ENCODE measurements at regions of chr2 and their contacts with region 1.

Region 1: DNA sequence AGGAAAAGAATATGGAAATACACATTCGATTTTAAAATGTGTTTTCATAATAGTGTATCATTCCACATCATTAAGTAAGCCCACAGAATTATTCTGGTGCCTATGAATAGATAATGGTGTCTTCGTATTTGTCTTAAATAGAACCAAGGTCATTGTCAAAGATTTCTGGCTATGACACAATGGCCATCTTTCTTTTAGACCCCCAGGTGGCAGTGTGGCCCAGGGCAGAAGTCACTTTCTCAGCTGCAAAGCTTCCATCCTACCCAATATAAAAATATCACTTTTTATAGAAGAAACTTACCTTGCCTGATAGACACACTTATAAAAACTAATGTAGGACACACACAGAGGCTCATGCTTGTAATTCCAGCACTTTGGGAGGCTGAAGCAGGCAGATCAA is 57.5 kb downstream of the ZRANB3 start:
- DNase-seq: peak in 1 of 2 experiments; percentile 30
- H3K4me3 ChIP-seq: no peak overlapping the region
- H3K4me3 Mint-ChIP-seq: no peak overlapping the region
- H3K27ac Mint-ChIP-seq: no peak overlapping the region
- H3K4me1 ChIP-seq: no peaks in the 10 kb centered on the region
- H3K4me1 Mint-ChIP-seq: no peaks in the 10 kb centered on the region
- H3K27me3 ChIP-seq: no peaks in the 10 kb centered on the region
- H3K27me3 Mint-ChIP-seq: no peaks in the 10 kb centered on the region
- CTCF ChIP-seq: peak; percentile 50 to 73

Region 2: GRCh38 chr2:135531231-135532228 is 58.0 kb after region 1 on chr2 and contains the start of gene R3HDM1:
- CTCF ChIA-PET with region 1: no interaction called
- POLR2A ChIA-PET with region 1: no interaction called
- intact Hi-C with region 1: loop called (anchors 1 kb)
- DNase-seq: peak; percentile 98 to 99
- H3K4me3 ChIP-seq: peak within 1 kb of the TSS; percentile 86
- H3K4me3 Mint-ChIP-seq: no peak within 1 kb of the TSS
- H3K27ac Mint-ChIP-seq: peak within 1 kb of the TSS; percentile 45
- H3K4me1 ChIP-seq: peaks cover 7% of the 10 kb centered on the region; the same call in 1 of the 2 replicates
- H3K4me1 Mint-ChIP-seq: peaks cover 6% of the 10 kb centered on the region
- H3K27me3 ChIP-seq: no peaks in the 10 kb centered on the region
- H3K27me3 Mint-ChIP-seq: no peaks in the 10 kb centered on the region
- CTCF ChIP-seq: peak; percentile 23 to 39
- total RNA-seq, gene R3HDM1: 44.4 and 45.3 TPM in 2 replicates

Region 3: DNA sequence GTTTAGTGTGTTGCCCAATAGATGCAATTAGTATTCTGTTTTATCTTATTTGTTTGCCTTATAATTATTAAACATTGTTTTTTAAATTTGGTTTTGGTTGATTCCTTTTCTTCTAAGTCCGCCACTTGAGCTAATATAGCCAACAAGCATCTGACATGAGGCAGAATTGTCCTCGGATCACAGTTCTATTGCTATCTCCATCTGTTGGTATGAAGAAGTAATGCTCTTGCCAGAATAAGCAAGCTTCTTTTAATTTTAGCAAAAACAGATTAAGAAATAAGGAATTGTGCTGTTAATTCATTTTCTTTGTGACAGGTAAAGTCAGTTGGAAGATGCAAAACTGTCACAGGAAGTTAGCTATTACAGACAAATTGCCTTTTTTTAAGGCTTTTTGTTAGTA is 112.0 kb after region 1 on chr2:
- CTCF ChIA-PET with region 1: interaction called, 4 read pairs
- POLR2A ChIA-PET with region 1: no interaction called
- intact Hi-C with region 1: loop called (anchors 5 kb)
- DNase-seq: no peak
- H3K4me3 ChIP-seq: no peak overlapping the region
- H3K4me3 Mint-ChIP-seq: no peak overlapping the region
- H3K27ac Mint-ChIP-seq: no peak overlapping the region
- H3K4me1 ChIP-seq: no peaks in the 10 kb centered on the region
- H3K4me1 Mint-ChIP-seq: peaks cover 6% of the 10 kb centered on the region
- H3K27me3 ChIP-seq: no peaks in the 10 kb centered on the region
- H3K27me3 Mint-ChIP-seq: no peaks in the 10 kb centered on the region
- CTCF ChIP-seq: peak in 1 of 2 experiments; percentile 8

Region 4: GRCh38 chr2:135600915-135601314 is 127.3 kb after region 1 on chr2:
- CTCF ChIA-PET with region 1: interaction called, 5 read pairs
- POLR2A ChIA-PET with region 1: no interaction called
- intact Hi-C with region 1: loop called (anchors 1 kb)
- DNase-seq: no peak
- H3K4me3 ChIP-seq: no peak overlapping the region
- H3K4me3 Mint-ChIP-seq: no peak overlapping the region
- H3K27ac Mint-ChIP-seq: no peak overlapping the region
- H3K4me1 ChIP-seq: no peaks in the 10 kb centered on the region
- H3K4me1 Mint-ChIP-seq: no peaks in the 10 kb centered on the region
- H3K27me3 ChIP-seq: no peaks in the 10 kb centered on the region
- H3K27me3 Mint-ChIP-seq: no peaks in the 10 kb centered on the region
- CTCF ChIP-seq: no peak

Region 5: GRCh38 chr2:135709992-135710391 is 236.4 kb after region 1 on chr2:
- CTCF ChIA-PET with region 1: interaction called, 14 read pairs
- POLR2A ChIA-PET with region 1: no interaction called
- intact Hi-C with region 1: no loop called
- DNase-seq: peak; percentile 54 to 75
- H3K4me3 ChIP-seq: no peak overlapping the region
- H3K4me3 Mint-ChIP-seq: no peak overlapping the region
- H3K27ac Mint-ChIP-seq: no peak overlapping the region
- H3K4me1 ChIP-seq: no peaks in the 10 kb centered on the region
- H3K4me1 Mint-ChIP-seq: no peaks in the 10 kb centered on the region
- H3K27me3 ChIP-seq: no peaks in the 10 kb centered on the region
- H3K27me3 Mint-ChIP-seq: no peaks in the 10 kb centered on the region
- CTCF ChIP-seq: peak; percentile 94 to 96

Region 6: DNA sequence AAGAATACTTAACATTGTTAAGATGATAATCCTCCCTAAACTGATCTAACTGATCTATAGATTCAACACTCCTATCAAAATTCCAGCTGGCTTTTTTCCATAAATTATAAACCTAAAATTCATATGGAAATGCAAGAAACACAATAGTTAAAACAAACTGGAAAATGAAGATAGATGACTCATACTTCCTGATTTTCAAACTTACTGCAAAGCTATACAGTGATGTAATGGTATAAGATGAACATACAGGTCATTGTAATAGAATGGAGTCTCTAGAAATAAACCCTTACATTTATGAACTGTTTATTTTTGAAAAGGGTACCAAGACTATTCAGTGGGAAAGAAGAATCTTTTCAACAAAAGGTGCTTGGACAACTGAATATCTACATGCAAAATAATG is 300.4 kb after region 1 on chr2:
- CTCF ChIA-PET with region 1: no interaction called
- POLR2A ChIA-PET with region 1: no interaction called
- intact Hi-C with region 1: no loop called
- DNase-seq: no peak
- H3K4me3 ChIP-seq: no peak overlapping the region
- H3K4me3 Mint-ChIP-seq: no peak overlapping the region
- H3K27ac Mint-ChIP-seq: no peak overlapping the region
- H3K4me1 ChIP-seq: no peaks in the 10 kb centered on the region
- H3K4me1 Mint-ChIP-seq: no peaks in the 10 kb centered on the region
- H3K27me3 ChIP-seq: no peaks in the 10 kb centered on the region
- H3K27me3 Mint-ChIP-seq: no peaks in the 10 kb centered on the region
- CTCF ChIP-seq: no peak

Region 7: DNA sequence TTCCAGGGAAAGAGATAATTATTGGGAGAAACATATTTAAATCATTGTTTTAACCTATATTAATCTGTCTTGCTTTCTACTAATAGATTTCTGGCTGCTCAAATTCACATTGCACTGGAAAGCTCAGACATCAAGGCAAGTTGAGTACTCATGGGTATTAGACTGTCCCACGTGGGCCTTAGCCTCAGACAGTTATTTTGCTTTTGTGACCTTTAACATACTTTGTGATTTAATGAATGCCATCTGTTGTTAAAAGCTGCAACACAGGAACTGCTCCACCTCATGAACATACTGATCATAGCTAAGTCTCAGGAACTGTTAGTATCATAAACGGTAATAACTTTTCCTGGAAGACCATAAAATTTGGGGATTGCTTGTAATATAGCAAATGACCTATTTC is 366.1 kb after region 1 on chr2:
- CTCF ChIA-PET with region 1: no interaction called
- POLR2A ChIA-PET with region 1: no interaction called
- intact Hi-C with region 1: no loop called
- DNase-seq: no peak
- H3K4me3 ChIP-seq: no peak overlapping the region
- H3K4me3 Mint-ChIP-seq: no peak overlapping the region
- H3K27ac Mint-ChIP-seq: no peak overlapping the region
- H3K4me1 ChIP-seq: peaks cover 17% of the 10 kb centered on the region
- H3K4me1 Mint-ChIP-seq: peaks cover 21% of the 10 kb centered on the region
- H3K27me3 ChIP-seq: no peaks in the 10 kb centered on the region
- H3K27me3 Mint-ChIP-seq: no peaks in the 10 kb centered on the region
- CTCF ChIP-seq: no peak